PC-9 (cell line): ENCODE measurements at regions of chr6 and their contacts with region 1.

Region 1: GRCh38 chr6:145633981-145634627 is 101.2 kb downstream of the EPM2A start:
- DNase-seq: peak; percentile 43 to 69
- H3K4me3 ChIP-seq: no peak overlapping the region
- H3K27ac ChIP-seq: no peak overlapping the region
- H3K4me1 ChIP-seq: no peaks in the 10 kb centered on the region
- H3K27me3 ChIP-seq: no peaks in the 10 kb centered on the region
- CTCF ChIP-seq: peak; percentile 91

Region 2: DNA sequence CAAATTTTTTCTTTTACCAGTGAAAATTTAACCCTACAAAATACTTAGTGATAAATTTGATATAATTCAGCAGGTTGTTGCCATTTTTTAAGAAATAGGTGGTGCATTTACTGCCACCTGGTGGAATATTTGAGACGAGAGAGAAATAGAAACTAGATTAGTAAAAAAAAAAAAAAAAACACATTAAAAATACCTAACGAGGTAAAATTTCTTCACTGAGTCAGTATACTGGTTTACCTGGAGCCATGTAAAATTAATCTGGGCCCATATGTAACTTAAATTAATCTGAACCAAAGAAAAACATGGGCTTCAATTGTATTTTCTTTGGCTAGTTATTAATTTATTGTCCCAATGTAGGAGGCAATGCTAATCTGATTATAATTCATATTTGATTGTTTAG is 419.5 kb before region 1 on chr6:
- CTCF ChIA-PET with region 1: no interaction called
- POLR2A ChIA-PET with region 1: no interaction called
- intact Hi-C with region 1: loop called (anchors 5 kb)
- DNase-seq: no peak
- H3K4me3 ChIP-seq: no peak overlapping the region
- H3K27ac ChIP-seq: no peak overlapping the region
- H3K4me1 ChIP-seq: no peaks in the 10 kb centered on the region
- H3K27me3 ChIP-seq: no peaks in the 10 kb centered on the region
- CTCF ChIP-seq: peak; percentile 79

Region 3: GRCh38 chr6:145380186-145380585 is 253.9 kb before region 1 on chr6:
- CTCF ChIA-PET with region 1: no interaction called
- POLR2A ChIA-PET with region 1: no interaction called
- intact Hi-C with region 1: loop called (anchors 10 kb)
- DNase-seq: no peak
- H3K4me3 ChIP-seq: no peak overlapping the region
- H3K27ac ChIP-seq: no peak overlapping the region
- H3K4me1 ChIP-seq: no peaks in the 10 kb centered on the region
- H3K27me3 ChIP-seq: no peaks in the 10 kb centered on the region
- CTCF ChIP-seq: no peak

Region 4: DNA sequence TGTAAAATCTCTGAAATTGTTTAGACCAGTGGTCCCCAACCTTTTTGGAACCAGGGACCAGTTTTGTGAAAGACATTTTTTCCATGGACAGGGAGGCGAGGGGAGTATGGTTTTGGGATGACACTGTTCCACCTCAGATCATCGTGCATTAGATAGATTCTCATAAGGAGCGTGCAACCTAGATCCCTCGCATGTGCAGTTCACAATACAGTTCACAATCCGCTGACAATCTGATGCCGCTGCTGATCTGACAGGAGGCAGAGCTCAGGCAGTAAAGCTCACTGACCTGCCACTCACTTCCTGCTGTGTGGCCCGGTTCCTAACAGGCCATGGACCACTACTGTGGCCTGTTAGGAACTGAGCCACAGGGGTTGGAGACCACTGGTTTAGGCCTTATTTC is 14.0 kb before region 1 on chr6:
- CTCF ChIA-PET with region 1: no interaction called
- POLR2A ChIA-PET with region 1: no interaction called
- intact Hi-C with region 1: no loop called
- DNase-seq: no peak
- H3K4me3 ChIP-seq: no peak overlapping the region
- H3K27ac ChIP-seq: no peak overlapping the region
- H3K4me1 ChIP-seq: no peaks in the 10 kb centered on the region
- H3K27me3 ChIP-seq: no peaks in the 10 kb centered on the region
- CTCF ChIP-seq: no peak